Spleen (tissue), 13 donors: ENCODE measurements at regions of chr5 and their contacts with region 1.

Region 1: GRCh38 chr5:80083101-80083890 is 48.1 kb downstream of the THBS4 start:
- DNase-seq: no peak
- H3K4me3 ChIP-seq: peak overlapping the region in 7 of 8 donors; percentile 4 to 53 (median 15)
- H3K27ac ChIP-seq: peak overlapping the region in 5 of 8 donors; percentile 35 to 53 (median 51)
- H3K4me1 ChIP-seq: peaks cover 4 to 13% (median 12%) of the 10 kb centered on the region in 6 donors
- H3K27me3 ChIP-seq: no peaks in the 10 kb centered on the region
- CTCF ChIP-seq: peak; percentile 18 to 84 (median 69)
- POLR2A ChIP-seq: no peak

Region 2: DNA sequence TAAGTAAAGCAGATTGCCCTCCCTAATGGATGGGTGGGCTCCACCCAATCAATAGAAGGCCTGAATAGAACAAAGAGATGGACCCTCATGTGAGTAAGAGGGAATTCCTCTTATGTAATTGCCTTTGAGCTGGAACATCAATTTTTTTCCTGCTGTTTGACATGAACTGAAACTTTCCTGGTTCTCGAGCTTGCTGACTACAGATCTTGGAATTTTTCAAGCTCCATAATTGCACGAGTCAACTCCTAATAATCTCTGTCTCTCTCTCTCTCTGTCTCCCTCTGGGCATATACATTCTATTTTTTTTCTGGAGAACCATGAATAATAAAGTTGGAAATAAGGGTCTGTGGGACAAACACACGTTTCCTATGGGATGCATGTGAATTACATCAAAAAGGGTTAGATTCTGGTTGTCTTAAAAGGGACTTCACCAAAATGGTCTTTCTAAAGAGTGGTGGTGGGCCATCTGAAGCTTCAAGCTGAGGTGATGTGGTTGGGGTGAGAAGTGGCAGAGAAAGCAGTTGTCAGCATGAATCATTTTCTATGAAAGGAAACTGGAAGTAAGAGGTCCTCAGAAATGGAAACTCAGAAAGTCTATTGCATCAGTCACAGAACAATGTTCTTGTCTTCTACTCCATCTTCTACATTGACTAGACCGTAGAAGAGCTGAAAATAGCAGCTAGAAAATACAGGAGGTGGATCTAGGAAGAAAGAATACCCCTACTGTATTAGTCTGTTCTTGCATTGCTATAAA is 522.3 kb before region 1 on chr5:
- intact Hi-C with region 1: loop called (anchors 5 kb)
- DNase-seq: no peak
- H3K4me3 ChIP-seq: no peak overlapping the region
- H3K27ac ChIP-seq: peak overlapping the region in 1 of 8 donors; percentile 4
- H3K4me1 ChIP-seq: peaks cover 0 to 14% (median 2%) of the 10 kb centered on the region in 6 donors
- H3K27me3 ChIP-seq: peaks cover 0 to 4% (median 0%) of the 10 kb centered on the region in 7 donors
- CTCF ChIP-seq: no peak
- POLR2A ChIP-seq: no peak

Region 3: GRCh38 chr5:79857714-79858409 is 225.4 kb before region 1 on chr5:
- intact Hi-C with region 1: loop called (anchors 5 kb)
- DNase-seq: peak; percentile 84
- H3K4me3 ChIP-seq: no peak overlapping the region
- H3K27ac ChIP-seq: no peak overlapping the region
- H3K4me1 ChIP-seq: peaks cover 0 to 6% (median 0%) of the 10 kb centered on the region in 6 donors
- H3K27me3 ChIP-seq: peaks cover 0 to 8% (median 0%) of the 10 kb centered on the region in 7 donors
- CTCF ChIP-seq: peak; percentile 66 to 93 (median 90)
- POLR2A ChIP-seq: no peak

Region 4: GRCh38 chr5:79924936-79925893 is 158.1 kb before region 1 on chr5:
- intact Hi-C with region 1: loop called (anchors 10 kb)
- DNase-seq: no peak
- H3K4me3 ChIP-seq: no peak overlapping the region
- H3K27ac ChIP-seq: no peak overlapping the region
- H3K4me1 ChIP-seq: no peaks in the 10 kb centered on the region
- H3K27me3 ChIP-seq: no peaks in the 10 kb centered on the region
- CTCF ChIP-seq: peak in 1 of 11 experiments; percentile 30
- POLR2A ChIP-seq: no peak